PC-3 (cell line): ENCODE measurements at regions of chr1 and their contacts with region 1.

Region 1: GRCh38 chr1:86913896-86914634 is at the start of gene SELENOF:
- DNase-seq: peak; percentile 100
- ATAC-seq: peak; percentile 83
- H3K4me3 ChIP-seq: peak within 1 kb of the TSS; percentile 99
- H3K27ac ChIP-seq: peak within 1 kb of the TSS; percentile 68
- H3K4me1 ChIP-seq: peaks cover 17% of the 10 kb centered on the region
- H3K27me3 ChIP-seq: no peaks in the 10 kb centered on the region
- CTCF ChIP-seq: no peak
- total RNA-seq, gene SELENOF: 143 and 174 TPM in 2 replicates

Region 2: GRCh38 chr1:86429835-86430234 is 484.2 kb before region 1 on chr1:
- CTCF ChIA-PET with region 1: no interaction called
- POLR2A ChIA-PET with region 1: interaction called, 10 read pairs
- intact Hi-C with region 1: no loop called
- DNase-seq: peak; percentile 94
- ATAC-seq: peak; percentile 88
- H3K4me3 ChIP-seq: peak overlapping the region; percentile 49
- H3K27ac ChIP-seq: peak overlapping the region; percentile 98
- H3K4me1 ChIP-seq: peaks cover 44% of the 10 kb centered on the region
- H3K27me3 ChIP-seq: no peaks in the 10 kb centered on the region
- CTCF ChIP-seq: no peak

Region 3: DNA sequence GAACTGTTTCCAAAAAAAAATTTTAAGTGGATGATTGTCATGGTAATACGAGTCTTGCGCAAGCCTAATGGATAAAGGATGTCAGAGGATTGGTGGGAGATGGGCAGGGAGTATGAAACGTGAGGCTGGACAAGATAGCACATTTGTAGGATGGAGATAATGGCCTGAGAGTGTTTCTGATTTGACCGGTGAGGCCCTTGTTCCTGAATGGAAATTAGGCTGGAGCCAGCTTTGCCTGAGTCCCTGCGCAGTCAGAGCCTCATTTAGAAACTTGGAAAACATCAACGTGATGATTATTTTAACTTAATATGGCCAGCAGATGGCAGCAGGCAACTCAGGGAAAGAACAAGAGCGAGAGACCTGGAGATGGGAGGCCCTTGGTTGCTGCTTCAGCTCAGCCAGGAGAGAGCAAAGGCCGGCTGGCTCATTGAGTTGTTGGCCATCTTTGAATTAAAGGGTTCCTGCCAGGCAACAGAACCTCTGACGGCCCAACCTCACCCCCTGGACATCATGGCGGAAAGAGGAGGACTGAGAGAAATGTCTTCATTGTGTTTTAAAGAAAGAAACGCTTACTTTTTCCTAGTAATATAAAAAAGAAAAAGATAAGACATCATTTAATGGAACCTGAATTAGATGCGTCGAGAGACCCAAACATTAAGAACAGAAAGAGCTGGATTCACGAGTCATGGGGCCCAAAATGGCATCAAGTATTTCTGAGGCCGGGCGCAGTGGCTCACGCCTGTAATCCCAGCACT is 80.4 kb before region 1 on chr1:
- CTCF ChIA-PET with region 1: no interaction called
- POLR2A ChIA-PET with region 1: no interaction called
- intact Hi-C with region 1: loop called (anchors 2 kb)
- DNase-seq: peak; percentile 88
- ATAC-seq: peak; percentile 96
- H3K4me3 ChIP-seq: no peak overlapping the region
- H3K27ac ChIP-seq: no peak overlapping the region
- H3K4me1 ChIP-seq: no peaks in the 10 kb centered on the region
- H3K27me3 ChIP-seq: no peaks in the 10 kb centered on the region
- CTCF ChIP-seq: peak; percentile 81

Region 4: DNA sequence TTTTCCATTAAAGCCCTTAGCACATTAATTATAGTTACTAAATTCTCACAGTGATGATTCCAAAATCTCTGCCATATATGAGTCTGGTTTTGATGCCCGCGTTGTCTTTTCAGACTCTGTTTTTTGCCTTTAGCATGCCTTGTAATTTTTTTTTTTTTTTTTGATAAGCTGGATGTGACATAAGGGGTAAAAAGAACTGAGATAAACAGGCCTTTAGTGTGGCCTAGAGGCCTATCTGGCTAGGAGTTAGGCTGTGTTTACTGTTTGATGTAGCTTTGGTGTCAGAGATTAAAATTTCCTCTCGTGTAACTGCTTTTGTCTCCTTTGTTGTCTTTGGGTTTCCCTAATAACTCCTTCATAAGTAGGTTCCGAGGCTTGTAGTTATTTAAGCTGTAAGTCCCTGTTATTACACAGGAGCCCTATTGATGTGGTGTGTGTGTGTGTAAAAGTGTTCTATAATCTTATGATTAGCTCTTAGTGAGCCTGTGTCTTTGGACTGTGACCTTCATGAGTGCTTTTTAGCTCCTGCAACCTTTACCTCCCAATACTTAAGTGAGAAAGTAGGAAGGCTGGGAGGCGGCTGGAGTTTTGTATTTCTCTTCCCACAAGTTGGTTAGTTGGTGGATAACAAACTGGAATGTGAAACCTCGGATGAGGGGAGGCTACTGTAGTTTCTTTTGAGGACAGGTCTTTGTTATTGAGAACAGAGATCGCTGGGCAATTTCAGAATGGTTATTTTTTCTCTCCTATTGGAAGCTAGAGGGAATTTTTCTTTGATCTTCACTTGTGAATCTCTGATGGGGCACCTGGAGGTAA is 19.7 kb after region 1 on chr1:
- CTCF ChIA-PET with region 1: no interaction called
- POLR2A ChIA-PET with region 1: interaction called, 33 read pairs
- intact Hi-C with region 1: no loop called
- DNase-seq: no peak
- ATAC-seq: no peak
- H3K4me3 ChIP-seq: no peak overlapping the region
- H3K27ac ChIP-seq: no peak overlapping the region
- H3K4me1 ChIP-seq: peaks cover 10% of the 10 kb centered on the region
- H3K27me3 ChIP-seq: no peaks in the 10 kb centered on the region
- CTCF ChIP-seq: no peak

Region 5: DNA sequence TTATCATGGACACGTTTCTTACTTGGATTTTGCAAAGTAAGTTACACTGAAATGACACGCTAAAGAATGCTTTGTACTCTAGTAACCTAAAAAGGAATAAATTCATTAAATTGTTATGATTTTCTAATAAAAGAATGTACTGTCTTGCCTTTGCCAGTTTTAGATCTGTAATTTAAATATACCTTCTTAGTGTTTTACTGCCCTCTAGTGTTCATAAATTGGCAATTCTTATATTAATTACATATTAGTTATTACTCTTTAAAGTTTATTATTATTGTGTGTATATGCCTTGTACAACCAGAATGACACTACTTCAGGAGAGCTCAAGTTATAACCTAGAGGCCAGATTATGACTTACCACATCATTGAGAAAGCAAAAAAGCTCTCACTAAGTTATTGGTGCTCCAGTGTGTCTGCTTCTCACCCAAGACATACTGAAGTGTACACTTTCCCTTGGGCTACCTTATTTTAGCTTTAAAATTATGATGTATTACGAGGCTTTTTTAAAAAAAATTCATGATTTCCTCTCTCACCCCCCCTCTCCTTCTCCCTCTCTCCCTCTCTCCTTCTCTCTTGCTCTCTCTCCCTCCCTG is 170.3 kb after region 1 on chr1:
- CTCF ChIA-PET with region 1: no interaction called
- POLR2A ChIA-PET with region 1: interaction called, 3 read pairs
- intact Hi-C with region 1: loop called (anchors 5 kb)
- DNase-seq: peak; percentile 71
- ATAC-seq: peak; percentile 45
- H3K4me3 ChIP-seq: no peak overlapping the region
- H3K27ac ChIP-seq: no peak overlapping the region
- H3K4me1 ChIP-seq: peaks cover 7% of the 10 kb centered on the region
- H3K27me3 ChIP-seq: no peaks in the 10 kb centered on the region
- CTCF ChIP-seq: peak; percentile 51